Activated CD4-positive, alpha-beta T cell treated with anti-CD3 and anti-CD28 coated beads, Interleukin-2, amount 10 ng/mL, durations not matched to agents 24 days and 14 days (primary cell): ENCODE measurements at regions of chr16 and their contacts with region 1.

Region 1: GRCh38 chr16:66406534-66407221 is 20.4 kb upstream of the BEAN1 start:
- DNase-seq: peak; percentile 96
- H3K4me3 Mint-ChIP-seq: peak overlapping the region; percentile 87
- H3K27ac Mint-ChIP-seq: peak overlapping the region; percentile 63
- H3K4me1 Mint-ChIP-seq: peaks cover 19% of the 10 kb centered on the region
- H3K27me3 Mint-ChIP-seq: peaks cover 19% of the 10 kb centered on the region

Region 2: GRCh38 chr16:65817066-65817465 is 589.6 kb before region 1 on chr16:
- intact Hi-C with region 1: no loop called
- DNase-seq: no peak
- H3K4me3 Mint-ChIP-seq: no peak overlapping the region
- H3K27ac Mint-ChIP-seq: no peak overlapping the region
- H3K4me1 Mint-ChIP-seq: no peaks in the 10 kb centered on the region
- H3K27me3 Mint-ChIP-seq: no peaks in the 10 kb centered on the region

Region 3: GRCh38 chr16:65845466-65846201 is 561.0 kb before region 1 on chr16:
- intact Hi-C with region 1: no loop called
- DNase-seq: no peak
- H3K4me3 Mint-ChIP-seq: no peak overlapping the region
- H3K27ac Mint-ChIP-seq: no peak overlapping the region
- H3K4me1 Mint-ChIP-seq: no peaks in the 10 kb centered on the region
- H3K27me3 Mint-ChIP-seq: no peaks in the 10 kb centered on the region

Region 4: GRCh38 chr16:66167564-66168291 is 238.9 kb before region 1 on chr16:
- intact Hi-C with region 1: no loop called
- DNase-seq: no peak
- H3K4me3 Mint-ChIP-seq: no peak overlapping the region
- H3K27ac Mint-ChIP-seq: no peak overlapping the region
- H3K4me1 Mint-ChIP-seq: no peaks in the 10 kb centered on the region
- H3K27me3 Mint-ChIP-seq: peaks cover 2% of the 10 kb centered on the region

Region 5: GRCh38 chr16:66474750-66475199 is 68.1 kb after region 1 on chr16:
- intact Hi-C with region 1: loop called (anchors 2 kb)
- DNase-seq: peak; percentile 90
- H3K4me3 Mint-ChIP-seq: peak overlapping the region; percentile 10
- H3K27ac Mint-ChIP-seq: peak overlapping the region; percentile 77
- H3K4me1 Mint-ChIP-seq: peaks cover 31% of the 10 kb centered on the region
- H3K27me3 Mint-ChIP-seq: no peaks in the 10 kb centered on the region

Region 6: GRCh38 chr16:66516808-66517585 is 110.3 kb after region 1 on chr16:
- intact Hi-C with region 1: loop called (anchors 1 kb)
- DNase-seq: peak; percentile 95
- H3K4me3 Mint-ChIP-seq: peak overlapping the region; percentile 89
- H3K27ac Mint-ChIP-seq: peak overlapping the region; percentile 99
- H3K4me1 Mint-ChIP-seq: peaks cover 67% of the 10 kb centered on the region
- H3K27me3 Mint-ChIP-seq: no peaks in the 10 kb centered on the region

Region 7: GRCh38 chr16:66539623-66540469 is 133.2 kb after region 1 on chr16:
- intact Hi-C with region 1: no loop called
- DNase-seq: no peak
- H3K4me3 Mint-ChIP-seq: no peak overlapping the region
- H3K27ac Mint-ChIP-seq: peak overlapping the region; percentile 53
- H3K4me1 Mint-ChIP-seq: peaks cover 30% of the 10 kb centered on the region
- H3K27me3 Mint-ChIP-seq: no peaks in the 10 kb centered on the region

Region 8: GRCh38 chr16:66728117-66728787 is 321.6 kb after region 1 on chr16:
- intact Hi-C with region 1: loop called (anchors 1 kb)
- DNase-seq: peak; percentile 68
- H3K4me3 Mint-ChIP-seq: no peak overlapping the region
- H3K27ac Mint-ChIP-seq: peak overlapping the region; percentile 72
- H3K4me1 Mint-ChIP-seq: peaks cover 7% of the 10 kb centered on the region
- H3K27me3 Mint-ChIP-seq: no peaks in the 10 kb centered on the region

Region 9: DNA sequence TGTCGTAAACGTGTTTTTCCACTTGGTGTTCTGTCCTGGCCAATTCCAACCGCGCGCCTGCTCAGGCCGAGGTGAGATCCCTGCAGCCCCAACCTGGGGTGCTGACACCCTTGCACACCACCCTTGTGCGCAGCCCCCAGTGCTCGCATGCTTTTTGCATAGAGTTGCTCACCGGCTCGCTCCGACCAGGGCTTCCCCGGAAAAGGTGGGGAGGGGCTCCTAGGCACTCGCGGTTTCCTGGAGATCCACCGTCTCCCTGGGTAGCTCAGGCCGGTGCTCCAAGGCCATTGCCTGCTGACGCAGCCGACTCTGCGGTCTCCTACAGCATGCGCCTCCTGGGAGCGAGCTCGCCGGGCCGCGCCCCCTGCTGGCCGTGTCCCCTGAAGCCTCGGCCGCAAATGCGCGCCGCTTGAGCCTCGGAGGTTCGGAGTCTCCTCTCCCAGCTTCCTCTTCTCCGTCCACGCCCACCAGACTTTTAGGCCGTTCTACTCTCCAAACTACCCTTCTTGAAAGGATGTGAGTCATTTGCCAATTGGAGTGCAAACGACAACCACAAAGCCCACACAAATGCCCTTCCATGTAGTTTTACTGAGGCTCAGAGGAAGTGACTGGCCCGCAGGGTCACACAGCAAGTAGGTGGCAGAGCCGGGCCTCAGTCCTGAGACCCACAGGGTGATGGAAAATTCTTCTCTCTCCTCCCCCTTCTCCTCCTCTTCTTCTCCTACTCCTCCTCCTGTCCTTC is 466.4 kb after region 1 on chr16:
- intact Hi-C with region 1: loop called (anchors 2 kb)
- DNase-seq: peak; percentile 97
- H3K4me3 Mint-ChIP-seq: peak overlapping the region; percentile 87
- H3K27ac Mint-ChIP-seq: peak overlapping the region; percentile 94
- H3K4me1 Mint-ChIP-seq: peaks cover 47% of the 10 kb centered on the region
- H3K27me3 Mint-ChIP-seq: no peaks in the 10 kb centered on the region